H1 (cell line): ENCODE measurements at regions of chr13 and their contacts with region 1.

Region 1: DNA sequence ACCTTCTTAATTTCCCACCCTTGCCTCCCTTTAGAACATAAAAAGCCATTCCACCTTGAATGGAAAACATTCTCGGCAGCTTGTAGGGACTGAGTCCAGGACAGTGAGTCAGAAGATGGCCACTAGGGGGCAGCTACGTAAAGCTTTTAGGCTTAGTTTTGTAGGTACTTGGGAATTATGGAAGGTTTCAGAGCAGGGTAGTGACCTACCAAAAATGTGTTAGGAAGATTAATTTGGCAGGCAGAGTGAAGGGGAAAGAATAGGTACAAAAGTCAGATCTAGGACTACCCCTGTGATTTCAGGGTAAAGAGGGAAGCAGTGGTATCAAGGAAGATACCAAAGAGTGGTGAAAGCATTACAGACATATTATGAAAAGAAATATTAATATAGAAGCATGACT is 198.4 kb downstream of the NDFIP2 start:
- DNase-seq: peak; percentile 21 to 77
- H3K4me3 ChIP-seq: no peak overlapping the region
- H3K27ac ChIP-seq: no peak overlapping the region
- H3K4me1 ChIP-seq: no peaks in the 10 kb centered on the region
- H3K27me3 ChIP-seq: no peaks in the 10 kb centered on the region
- CTCF ChIP-seq: peak; percentile 58 to 89 (median 65)
- EP300 ChIP-seq: no peak
- POLR2A ChIP-seq: no peak
- RAD21 ChIP-seq: peak; percentile 93 to 94

Region 2: DNA sequence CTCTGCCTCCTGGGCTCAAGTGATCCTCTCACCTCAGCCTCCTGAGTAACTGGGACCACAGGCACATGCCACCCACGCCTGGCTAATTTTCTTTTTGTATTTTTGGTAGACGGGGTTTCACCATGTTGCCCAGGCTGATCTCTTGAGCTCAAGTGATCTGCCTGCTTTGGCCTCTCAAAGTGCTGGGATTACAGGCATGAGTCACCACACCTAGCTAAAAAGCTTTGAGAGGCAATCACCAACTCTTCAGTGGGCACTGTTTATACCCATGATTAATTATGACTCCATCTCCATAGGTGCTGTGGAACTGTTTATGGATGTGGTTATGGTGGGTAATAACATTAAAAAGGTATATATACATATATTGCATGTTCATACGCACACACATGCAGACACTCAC is 265.8 kb before region 1 on chr13:
- CTCF ChIA-PET with region 1: no interaction called
- POLR2A ChIA-PET with region 1: no interaction called
- DNase-seq: no peak
- H3K4me3 ChIP-seq: no peak overlapping the region
- H3K27ac ChIP-seq: no peak overlapping the region
- H3K4me1 ChIP-seq: no peaks in the 10 kb centered on the region
- H3K27me3 ChIP-seq: no peaks in the 10 kb centered on the region
- CTCF ChIP-seq: no peak
- EP300 ChIP-seq: no peak
- POLR2A ChIP-seq: no peak
- RAD21 ChIP-seq: no peak

Region 3: DNA sequence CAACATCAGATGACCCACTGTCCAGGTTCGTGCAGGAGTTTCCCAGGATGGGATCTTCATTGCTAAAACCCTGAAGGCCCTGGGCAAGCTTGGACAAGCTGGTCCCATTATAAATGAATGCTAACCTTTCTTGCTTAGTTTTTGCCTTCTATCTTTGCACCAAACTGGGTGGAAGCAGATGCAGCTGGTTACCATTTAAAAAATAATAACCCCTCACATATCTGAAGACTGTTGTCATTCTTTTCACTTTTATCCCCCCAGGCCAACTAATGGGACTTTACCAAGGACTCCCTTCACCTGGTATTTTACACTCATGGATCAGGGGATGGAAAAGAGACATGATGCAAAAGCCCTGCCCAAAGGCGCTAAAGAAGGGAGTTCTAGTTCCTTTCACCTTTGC is 29.2 kb after region 1 on chr13:
- CTCF ChIA-PET with region 1: interaction called, 14 read pairs
- POLR2A ChIA-PET with region 1: no interaction called
- DNase-seq: no peak
- H3K4me3 ChIP-seq: no peak overlapping the region
- H3K27ac ChIP-seq: no peak overlapping the region
- H3K4me1 ChIP-seq: no peaks in the 10 kb centered on the region
- H3K27me3 ChIP-seq: no peaks in the 10 kb centered on the region
- CTCF ChIP-seq: no peak
- EP300 ChIP-seq: no peak
- POLR2A ChIP-seq: no peak
- RAD21 ChIP-seq: no peak